Activated T-helper 2 cell treated with anti-CD3 and anti-CD28 coated beads, Interferon-gamma antibody, Interleukin-2, Interleukin-4, amounts not matched to agents 10 μg/mL and 5 μg/mL and 100 μg/mL, durations not matched to agents 14 hours and 24 hours and 36 hours (primary cell): ENCODE measurements at regions of chr3 and their contacts with region 1.

Region 1: DNA sequence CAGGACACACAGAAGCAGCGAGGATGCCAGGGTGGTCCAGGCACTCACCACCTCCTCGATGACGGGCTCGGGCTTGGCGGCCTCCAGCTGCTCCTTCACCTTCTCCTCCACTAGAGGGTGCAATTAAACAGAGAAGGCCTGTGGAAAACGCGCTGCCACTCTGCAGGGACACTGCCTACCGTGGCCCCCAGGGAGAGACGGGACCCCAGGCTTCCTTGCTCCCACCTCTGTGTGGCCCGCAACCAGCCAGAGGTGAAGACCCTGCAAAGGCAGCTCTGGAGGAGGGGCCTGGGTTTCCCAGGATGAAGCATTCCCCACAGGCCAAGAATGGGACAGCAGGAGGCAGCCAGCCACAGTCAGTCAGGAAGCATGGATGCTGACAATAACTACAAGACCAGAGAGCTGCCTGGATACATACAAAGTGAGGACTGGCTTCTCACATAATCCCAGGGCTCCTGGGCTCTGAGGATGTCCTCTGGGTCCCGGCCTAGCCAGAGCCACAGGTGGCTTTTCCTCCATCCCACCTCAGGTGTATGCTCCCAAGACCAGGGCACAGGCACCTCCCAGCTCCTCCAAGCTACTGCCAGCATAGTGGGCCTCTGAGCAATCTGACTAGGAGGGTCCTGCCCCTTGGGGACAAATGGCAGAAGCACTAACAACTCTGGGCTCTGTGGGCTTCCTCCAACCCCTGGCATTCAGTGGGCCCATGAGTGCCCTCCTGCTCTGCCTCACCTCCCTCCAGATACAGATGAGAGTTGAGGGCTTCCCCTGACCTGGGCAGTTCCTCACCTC is 46.2 kb downstream of the PTH1R start:
- DNase-seq: no peak
- H3K4me3 Mint-ChIP-seq: no peak overlapping the region
- H3K27ac Mint-ChIP-seq: peak overlapping the region; percentile 72
- H3K4me1 Mint-ChIP-seq: peaks cover 27% of the 10 kb centered on the region
- H3K27me3 Mint-ChIP-seq: no peaks in the 10 kb centered on the region

Region 2: DNA sequence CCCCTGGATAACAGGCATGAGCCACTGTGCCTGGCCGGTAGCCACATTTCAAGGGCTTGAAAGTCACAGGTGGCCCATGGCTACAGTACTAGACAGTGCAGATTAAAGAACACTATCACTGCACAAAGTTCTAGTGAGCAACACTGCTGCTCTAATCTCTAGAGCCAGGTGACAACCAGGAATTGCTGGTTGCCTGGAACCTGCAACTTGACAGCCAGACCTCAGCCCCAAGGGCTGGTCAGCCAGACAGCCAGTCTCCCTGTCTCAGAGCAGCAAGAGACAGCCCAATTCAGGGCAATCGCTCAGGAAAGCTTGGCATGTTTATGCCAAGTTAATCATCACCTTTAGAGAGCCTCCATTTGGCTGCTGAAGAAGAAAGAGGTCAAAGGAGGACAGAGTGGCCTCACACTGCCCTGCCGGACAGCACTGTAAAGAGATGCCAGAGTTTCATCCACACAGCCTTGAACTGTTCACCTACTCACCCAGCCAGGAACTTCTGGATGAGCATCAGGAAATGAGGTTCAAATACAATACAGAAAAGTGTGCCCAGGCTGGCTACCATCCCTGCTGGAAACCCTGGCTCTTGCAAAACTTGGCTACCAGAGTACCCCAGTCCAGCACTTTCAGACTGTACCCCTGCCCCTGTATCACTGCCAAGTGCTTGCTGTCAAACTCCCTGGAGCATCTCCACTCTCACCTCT is 46.8 kb after region 1 on chr3:
- intact Hi-C with region 1: loop called (anchors 5 kb)
- DNase-seq: no peak
- H3K4me3 Mint-ChIP-seq: no peak overlapping the region
- H3K27ac Mint-ChIP-seq: peak overlapping the region; percentile 22
- H3K4me1 Mint-ChIP-seq: peaks cover 67% of the 10 kb centered on the region
- H3K27me3 Mint-ChIP-seq: no peaks in the 10 kb centered on the region

Region 3: GRCh38 chr3:46998121-46998851 is 74.5 kb after region 1 on chr3:
- intact Hi-C with region 1: loop called (anchors 1 kb)
- DNase-seq: peak; percentile 55
- H3K4me3 Mint-ChIP-seq: no peak overlapping the region
- H3K27ac Mint-ChIP-seq: peak overlapping the region; percentile 9
- H3K4me1 Mint-ChIP-seq: peaks cover 6% of the 10 kb centered on the region
- H3K27me3 Mint-ChIP-seq: no peaks in the 10 kb centered on the region